Activated T-helper 1 cell treated with anti-CD3 and anti-CD28 coated beads, Interleukin-12 subunit alpha, Interleukin-12 subunit beta, Interleukin-2, Interleukin-4 antibody, amounts not matched to agents 30 ng/mL and 10 ng/mL and 1 ng/mL, durations not matched to agents 14 hours and 24 hours and 36 hours (primary cell): ENCODE measurements at regions of chr2 and their contacts with region 1.

Region 1: DNA sequence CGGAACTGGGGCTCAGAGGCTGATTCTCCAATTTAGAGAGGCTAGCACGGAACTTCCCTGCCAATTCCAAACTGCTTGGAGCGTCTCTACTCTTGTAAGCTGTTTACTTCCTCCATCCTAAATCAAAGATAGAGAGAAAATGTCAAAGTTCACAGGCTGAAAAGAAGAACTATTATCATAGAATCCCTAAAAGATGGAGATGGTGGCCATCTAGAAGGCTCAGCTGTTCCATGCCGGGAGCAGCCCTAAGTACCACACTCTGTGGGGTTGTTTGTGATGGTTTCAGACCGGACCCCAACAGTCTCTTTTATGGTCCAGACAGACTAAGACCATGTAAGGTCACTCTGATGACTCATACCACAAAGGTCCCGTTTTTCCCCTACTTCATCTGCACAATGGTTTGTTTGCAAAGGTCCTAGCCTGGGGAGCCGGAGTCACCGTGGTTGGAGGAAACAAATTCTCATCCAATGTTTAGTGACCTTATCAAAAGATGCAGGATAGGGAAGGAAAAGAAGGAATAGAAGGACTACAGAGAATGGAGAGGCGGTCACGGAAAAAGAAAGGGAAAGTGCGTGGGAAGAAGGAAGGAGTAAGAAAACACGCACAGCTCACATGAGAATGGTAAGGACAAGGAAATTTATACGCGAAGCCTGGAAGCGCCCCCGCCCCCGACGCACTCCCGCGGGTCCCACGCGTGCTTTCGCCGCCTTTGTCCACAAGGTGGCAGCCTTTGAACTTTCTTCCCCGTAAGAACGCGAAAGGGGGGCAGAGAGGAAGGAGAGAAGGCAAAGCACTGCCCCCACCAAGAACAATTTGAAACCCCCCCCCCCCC is 453 bp upstream of the ANTXR1 start:
- DNase-seq: peak; percentile 8
- H3K4me3 Mint-ChIP-seq: peak overlapping the region; percentile 81
- H3K27ac Mint-ChIP-seq: peak overlapping the region; percentile 7
- H3K4me1 Mint-ChIP-seq: peaks cover 13% of the 10 kb centered on the region
- H3K27me3 Mint-ChIP-seq: peaks cover 55% of the 10 kb centered on the region

Region 2: GRCh38 chr2:68605939-68606338 is 406.6 kb before region 1 on chr2:
- intact Hi-C with region 1: no loop called
- DNase-seq: no peak
- H3K4me3 Mint-ChIP-seq: no peak overlapping the region
- H3K27ac Mint-ChIP-seq: no peak overlapping the region
- H3K4me1 Mint-ChIP-seq: no peaks in the 10 kb centered on the region
- H3K27me3 Mint-ChIP-seq: peaks cover 19% of the 10 kb centered on the region

Region 3: GRCh38 chr2:68943581-68944568 is 68.7 kb before region 1 on chr2:
- intact Hi-C with region 1: loop called (anchors 5 kb)
- DNase-seq: peak; percentile 36
- H3K4me3 Mint-ChIP-seq: no peak overlapping the region
- H3K27ac Mint-ChIP-seq: no peak overlapping the region
- H3K4me1 Mint-ChIP-seq: peaks cover 5% of the 10 kb centered on the region
- H3K27me3 Mint-ChIP-seq: peaks cover 47% of the 10 kb centered on the region

Region 4: DNA sequence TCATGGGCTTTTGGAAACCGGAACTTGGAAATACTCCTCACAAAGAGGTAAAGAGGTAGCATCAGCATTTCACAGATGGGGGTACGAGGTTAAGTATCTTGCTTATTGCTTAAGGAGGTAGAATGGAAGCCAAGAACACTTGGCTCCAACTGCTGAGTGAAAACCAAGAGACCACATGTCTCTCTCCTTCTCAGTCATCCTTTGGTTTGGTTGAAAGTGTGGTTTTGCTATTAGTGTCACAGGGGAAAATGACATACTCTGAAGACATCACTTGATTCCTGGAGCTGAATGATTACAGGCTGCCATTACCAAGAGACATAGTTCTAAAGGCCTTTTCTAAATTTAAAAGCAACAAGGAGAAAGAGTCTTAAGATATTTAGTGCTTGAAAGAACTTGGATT is 41.9 kb after region 1 on chr2:
- intact Hi-C with region 1: loop called (anchors 1 kb)
- DNase-seq: peak; percentile 8
- H3K4me3 Mint-ChIP-seq: no peak overlapping the region
- H3K27ac Mint-ChIP-seq: no peak overlapping the region
- H3K4me1 Mint-ChIP-seq: peaks cover 14% of the 10 kb centered on the region
- H3K27me3 Mint-ChIP-seq: peaks cover 54% of the 10 kb centered on the region